AG04449 (cell line): ENCODE measurements at regions of chr6 and their contacts with region 1.

Region 1: GRCh38 chr6:32868257-32868788 is 14.3 kb downstream of the PSMB9 start:
- DNase-seq: no peak
- H3K4me3 ChIP-seq: no peak overlapping the region
- CTCF ChIP-seq: peak; percentile 70

Region 2: DNA sequence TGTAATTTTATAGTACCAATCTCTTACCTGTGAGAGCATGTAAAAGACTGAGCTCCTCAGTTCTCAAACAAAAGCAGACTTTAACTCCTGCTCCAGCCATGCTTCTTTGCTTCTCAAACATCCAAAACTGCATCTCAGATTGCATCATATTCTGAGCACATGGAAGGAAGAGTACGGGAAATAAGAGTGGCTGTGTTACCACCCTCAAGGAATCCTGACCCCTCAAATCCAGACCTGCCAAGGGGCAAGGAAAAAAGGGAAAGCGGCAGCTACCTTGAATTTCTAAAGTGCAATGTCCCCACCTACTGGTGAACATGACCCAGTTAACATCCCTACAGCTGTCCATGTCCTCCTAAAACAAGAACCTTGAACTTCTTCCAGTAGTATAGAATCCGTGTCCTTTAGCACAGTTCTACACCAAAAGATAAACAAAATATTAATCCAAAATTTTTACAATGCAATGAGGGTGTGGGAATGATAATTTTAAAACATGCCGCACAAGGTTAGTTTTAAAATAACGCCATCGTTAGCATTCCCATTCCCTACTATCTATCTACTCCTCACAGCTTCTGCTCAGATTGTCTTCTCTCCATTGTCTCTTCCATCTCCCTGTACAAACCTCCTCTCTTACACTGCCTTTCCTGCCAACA is 167.8 kb before region 1 on chr6:
- CTCF ChIA-PET with region 1: interaction called, 10 read pairs
- POLR2A ChIA-PET with region 1: no interaction called
- DNase-seq: no peak
- H3K4me3 ChIP-seq: no peak overlapping the region
- CTCF ChIP-seq: peak; percentile 57

Region 3: DNA sequence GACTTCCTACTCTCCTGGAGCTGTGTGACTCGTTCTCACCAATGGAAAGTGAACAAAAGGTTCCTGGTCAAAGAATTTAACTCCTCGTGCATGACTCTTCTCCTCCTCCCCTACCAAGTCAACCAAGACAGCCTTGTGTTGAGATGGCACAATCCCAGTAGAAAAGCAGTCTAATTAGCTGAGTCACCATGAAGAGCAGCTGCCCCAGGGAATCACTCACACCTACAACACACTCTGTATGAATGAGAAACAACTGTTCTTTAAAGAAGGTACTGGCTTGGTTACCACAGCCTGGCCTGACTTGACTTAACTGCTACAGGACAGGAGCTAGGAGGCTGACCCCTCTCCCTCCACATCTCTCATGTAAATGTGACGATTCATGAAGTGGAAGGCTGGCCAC is 48.6 kb before region 1 on chr6:
- CTCF ChIA-PET with region 1: interaction called, 21 read pairs
- POLR2A ChIA-PET with region 1: no interaction called
- DNase-seq: no peak
- H3K4me3 ChIP-seq: no peak overlapping the region
- CTCF ChIP-seq: no peak

Region 4: DNA sequence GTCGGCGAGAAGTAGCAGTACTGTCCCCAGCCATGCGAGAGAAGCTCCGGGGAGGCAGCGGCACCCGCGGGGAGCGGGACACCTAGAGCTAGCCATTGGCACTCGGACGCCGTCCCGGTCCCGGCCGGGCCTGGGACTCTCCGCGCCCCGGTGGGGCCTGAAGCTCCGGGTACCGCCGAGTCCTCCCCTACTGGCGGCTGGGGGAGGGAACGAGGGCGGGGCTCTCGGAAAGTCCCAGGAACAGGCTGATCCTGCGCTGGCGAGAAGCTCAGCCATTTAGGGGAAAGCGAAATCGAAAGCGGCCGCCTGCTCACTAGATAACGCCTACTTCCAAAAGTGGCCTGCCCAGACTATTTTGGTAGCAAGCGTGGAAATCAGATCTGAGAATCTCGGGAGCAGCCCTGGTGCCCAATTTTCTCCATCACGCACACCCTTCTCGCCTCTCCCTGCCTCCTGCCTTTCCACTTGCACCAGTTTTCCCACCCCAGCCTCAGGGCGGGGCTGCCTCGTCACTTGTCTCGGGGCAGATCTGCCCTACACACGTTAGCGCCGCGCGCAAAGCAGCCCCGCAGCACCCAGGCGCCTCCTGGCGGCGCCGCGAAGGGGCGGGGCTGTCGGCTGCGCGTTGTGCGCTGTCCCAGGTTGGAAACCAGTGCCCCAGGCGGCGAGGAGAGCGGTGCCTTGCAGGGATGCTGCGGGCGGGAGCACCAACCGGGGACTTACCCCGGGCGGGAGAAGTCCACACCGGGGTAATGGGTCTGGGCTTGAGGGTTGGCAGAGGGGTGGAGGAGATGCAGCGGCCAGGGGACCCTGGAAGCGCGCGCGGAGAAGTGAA is 14.6 kb before region 1 on chr6 and contains the starts of genes PSMB9 and TAP1:
- CTCF ChIA-PET with region 1: interaction called, 199 read pairs
- POLR2A ChIA-PET with region 1: interaction called, 4 read pairs
- DNase-seq: peak; percentile 51
- H3K4me3 ChIP-seq: peak within 1 kb of the TSS; percentile 89
- CTCF ChIP-seq: peak; percentile 87

Region 5: DNA sequence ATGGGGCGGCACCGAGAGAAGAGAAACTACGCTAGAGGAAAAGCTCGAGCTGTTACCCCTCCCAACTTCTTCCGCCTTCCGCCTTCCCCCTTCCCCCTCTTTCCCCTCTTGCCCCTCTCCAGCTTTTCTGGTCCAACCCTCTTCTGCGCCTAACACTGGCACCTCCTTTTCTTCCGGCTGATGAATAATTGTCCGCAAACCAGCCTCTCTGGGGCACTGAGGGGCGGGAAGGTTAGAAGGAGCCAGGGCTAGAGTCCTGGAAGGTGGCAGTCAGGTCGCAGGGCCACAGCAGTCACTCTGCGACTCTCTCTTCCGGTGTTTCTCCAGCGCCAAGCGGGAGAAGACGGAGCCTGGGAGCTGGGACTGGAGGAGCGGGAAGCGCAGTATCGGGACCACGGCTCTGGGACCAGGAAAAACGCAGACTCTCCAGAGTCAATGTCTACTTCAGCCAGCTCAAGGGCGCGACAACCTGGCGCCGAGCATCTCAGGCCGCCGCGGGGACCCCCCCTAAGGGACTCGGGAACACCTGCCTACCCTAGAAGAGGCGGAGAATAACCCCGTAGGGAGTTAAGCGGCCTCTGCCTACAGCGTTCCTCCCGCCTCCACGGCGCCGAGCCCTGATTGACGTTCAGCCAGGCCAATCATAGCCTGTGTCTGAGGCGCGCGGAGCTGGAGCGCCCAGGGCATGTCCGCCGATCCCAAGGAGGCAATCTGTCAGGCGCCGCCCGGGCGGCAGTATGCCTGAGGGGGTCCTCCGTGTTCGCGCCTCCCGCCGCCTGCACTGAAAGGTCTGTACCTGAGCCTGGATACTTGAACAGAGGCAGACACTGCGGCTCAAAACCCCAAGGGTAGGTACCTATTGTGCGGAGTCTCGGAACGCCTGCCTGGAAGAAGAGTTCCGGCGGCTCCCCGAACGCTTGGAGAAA is 26.0 kb after region 1 on chr6:
- CTCF ChIA-PET with region 1: interaction called, 17 read pairs
- POLR2A ChIA-PET with region 1: no interaction called
- DNase-seq: peak; percentile 44
- H3K4me3 ChIP-seq: peak overlapping the region; percentile 77
- CTCF ChIP-seq: no peak

Region 6: DNA sequence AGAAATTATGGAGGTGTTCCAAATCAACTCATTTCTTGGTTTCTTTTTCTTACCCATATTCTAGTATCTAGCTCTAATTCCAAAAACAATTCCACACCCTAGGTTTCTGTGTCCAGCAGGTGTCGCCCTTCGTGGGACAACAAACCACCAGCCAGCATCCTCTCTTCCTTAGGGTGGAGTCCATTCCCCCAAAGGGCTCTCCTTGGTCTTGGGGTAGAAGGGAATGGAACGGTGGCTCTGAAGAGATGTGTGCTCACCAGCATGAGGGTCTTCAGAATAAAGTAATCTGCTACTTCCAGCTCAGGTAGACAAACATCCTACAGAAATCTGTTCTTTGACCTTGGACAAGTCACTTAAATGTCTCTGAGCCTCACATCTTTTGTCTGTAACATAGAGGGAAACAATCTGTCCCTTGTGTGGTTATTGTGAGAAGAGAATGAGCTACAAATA is 65.3 kb after region 1 on chr6:
- CTCF ChIA-PET with region 1: interaction called, 13 read pairs
- POLR2A ChIA-PET with region 1: no interaction called
- DNase-seq: no peak
- H3K4me3 ChIP-seq: no peak overlapping the region
- CTCF ChIP-seq: peak; percentile 73

Region 7: DNA sequence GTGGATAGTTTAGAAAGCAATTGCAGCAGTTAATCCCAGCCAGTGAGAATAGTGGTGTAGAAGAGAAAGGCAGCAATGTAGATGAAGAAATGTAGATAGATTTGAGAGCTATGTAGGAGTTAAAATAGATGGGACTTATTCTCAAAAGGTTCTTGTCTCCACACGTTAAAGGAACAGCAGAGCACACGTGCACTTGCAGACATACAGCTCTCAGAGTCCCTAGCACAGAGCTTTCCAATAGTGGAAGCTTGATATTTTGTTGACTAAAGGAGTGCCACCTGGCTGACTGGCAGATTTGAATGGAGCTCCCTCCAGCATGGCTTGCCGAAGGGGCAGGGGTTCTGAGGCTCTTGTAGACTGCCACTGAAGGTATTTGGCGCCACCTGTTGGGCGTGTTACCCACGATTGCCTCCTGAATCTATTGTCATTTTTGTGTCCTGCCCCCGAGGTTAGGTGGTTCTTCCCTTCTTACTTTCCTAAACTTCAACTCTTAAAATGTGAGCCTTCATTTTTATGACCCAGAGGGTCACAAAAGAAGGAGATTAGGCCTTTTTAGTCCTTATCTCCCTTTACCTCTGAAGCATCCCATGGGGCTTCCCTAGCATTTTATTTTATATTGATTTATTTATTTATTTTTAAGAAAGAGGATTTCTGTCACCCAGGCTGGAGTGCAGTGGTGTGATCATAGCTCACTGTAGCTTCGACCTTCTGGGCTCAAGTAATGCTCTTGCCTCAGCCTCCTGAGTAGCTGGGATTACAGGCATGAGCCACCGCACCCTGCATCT is 116.5 kb after region 1 on chr6:
- CTCF ChIA-PET with region 1: interaction called, 16 read pairs
- POLR2A ChIA-PET with region 1: no interaction called
- DNase-seq: no peak
- H3K4me3 ChIP-seq: no peak overlapping the region
- CTCF ChIP-seq: peak; percentile 82